Stomach (tissue), 19 donors: ENCODE measurements at regions of chr4 and their contacts with region 1.

Region 1: DNA sequence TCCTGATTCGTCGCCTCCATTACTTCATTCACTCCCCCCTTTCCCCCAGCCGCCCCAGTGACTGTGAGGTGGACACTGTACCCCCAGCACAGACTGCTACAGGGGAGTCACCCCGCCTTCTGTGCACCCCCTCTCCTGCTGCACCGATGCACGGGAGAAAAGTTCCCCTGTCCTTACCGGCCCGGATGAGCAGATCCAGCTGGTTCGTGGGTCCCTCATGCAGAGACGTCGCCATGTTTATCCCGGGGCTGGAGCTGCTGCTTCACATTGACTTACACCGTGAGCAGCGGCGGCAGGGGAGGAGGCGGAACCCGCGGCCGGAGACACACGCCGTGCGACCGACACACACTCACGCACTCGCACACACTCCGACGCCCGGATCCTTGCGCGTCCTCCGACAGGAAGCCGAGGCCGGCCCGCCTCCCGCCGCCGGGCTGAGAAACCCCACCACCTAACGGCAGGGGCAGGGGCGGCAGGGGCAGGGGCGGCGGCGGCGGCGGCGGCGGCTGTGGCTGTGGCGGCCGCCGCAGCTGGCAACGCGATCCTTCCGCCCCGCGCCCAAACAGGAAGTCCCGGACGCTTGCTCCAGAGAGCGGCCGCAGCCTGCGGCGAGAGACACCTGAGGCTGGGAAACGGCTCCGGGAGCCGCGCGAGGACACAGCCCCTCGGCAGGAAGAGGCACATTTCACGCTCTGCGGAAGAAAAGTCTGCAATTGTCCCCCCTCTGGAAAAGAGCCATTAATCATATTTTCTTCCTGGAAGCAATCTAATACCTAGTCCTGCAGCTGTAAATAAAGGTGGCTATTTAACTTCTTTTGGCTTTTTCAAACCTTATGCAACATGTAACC is 68.6 kb downstream of the NOCT start:
- DNase-seq: peak; percentile 90 to 97
- H3K4me3 ChIP-seq: peak overlapping the region; percentile 72 to 87 (median 86)
- H3K27ac ChIP-seq: peak overlapping the region; percentile 95 to 99 (median 97)
- H3K4me1 ChIP-seq: peaks cover 16 to 45% (median 35%) of the 10 kb centered on the region in 4 donors
- H3K27me3 ChIP-seq: no peaks in the 10 kb centered on the region
- CTCF ChIP-seq: peak in 2 of 7 experiments; percentile 15 to 37
- EP300 ChIP-seq: no peak
- POLR2A ChIP-seq: peak in 2 of 4 donors; percentile 26 to 34

Region 2: GRCh38 chr4:139030614-139031235 is 53.5 kb before region 1 on chr4:
- intact Hi-C with region 1: loop called (anchors 10 kb)
- DNase-seq: peak; percentile 79 to 95
- H3K4me3 ChIP-seq: no peak overlapping the region
- H3K27ac ChIP-seq: peak overlapping the region in 1 of 5 donors; percentile 18
- H3K4me1 ChIP-seq: peaks cover 0 to 37% (median 12%) of the 10 kb centered on the region in 4 donors
- H3K27me3 ChIP-seq: no peaks in the 10 kb centered on the region
- CTCF ChIP-seq: peak in 5 of 7 experiments; percentile 49 to 88 (median 70)
- EP300 ChIP-seq: no peak
- POLR2A ChIP-seq: no peak